ENCODE measurements at regions of chr17 and their contacts with region 1.

Region 1: DNA sequence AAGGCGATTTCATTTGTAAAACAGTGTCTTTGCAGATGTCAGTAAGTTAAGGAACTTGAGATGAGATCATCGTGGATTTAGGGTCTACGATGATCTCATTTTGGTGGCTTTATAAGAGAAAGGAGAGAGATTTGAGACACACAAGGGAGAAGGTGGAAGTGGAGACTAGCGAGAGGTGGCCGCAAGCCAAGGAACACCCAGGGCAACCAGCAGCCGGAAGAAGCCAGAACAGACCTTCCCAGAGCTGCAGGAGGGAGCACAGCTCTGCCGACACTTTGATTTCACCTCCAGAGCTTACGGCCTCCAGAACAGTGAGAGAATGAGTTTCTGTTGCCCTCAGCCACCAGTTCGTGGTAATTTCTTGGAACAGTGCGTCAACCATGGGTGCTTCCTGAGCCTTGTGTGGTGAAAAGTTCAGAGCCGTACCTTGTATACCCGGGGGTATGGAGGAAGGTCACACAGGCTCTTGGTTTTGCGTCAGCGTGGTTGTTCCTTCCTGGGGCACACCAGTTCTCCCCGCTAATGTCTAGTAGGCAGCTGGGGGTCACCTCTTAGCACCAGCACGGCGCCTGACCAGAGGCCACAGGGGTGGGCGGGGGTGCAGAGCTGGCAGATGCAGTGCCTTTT is 12.9 kb upstream of the SEC14L1 start:
- DNase-seq: no peak
- ATAC-seq: no peak
- H3K4me3 ChIP-seq: no peak overlapping the region
- H3K27ac ChIP-seq: peak overlapping the region; percentile 3 to 36; a peak in 4 of 6 replicates
- H3K4me1 ChIP-seq: peaks cover 66% of the 10 kb centered on the region
- CTCF ChIP-seq: no peak
- EP300 ChIP-seq: no peak
- POLR2A ChIP-seq: no peak
- RAD21 ChIP-seq: no peak

Region 2: DNA sequence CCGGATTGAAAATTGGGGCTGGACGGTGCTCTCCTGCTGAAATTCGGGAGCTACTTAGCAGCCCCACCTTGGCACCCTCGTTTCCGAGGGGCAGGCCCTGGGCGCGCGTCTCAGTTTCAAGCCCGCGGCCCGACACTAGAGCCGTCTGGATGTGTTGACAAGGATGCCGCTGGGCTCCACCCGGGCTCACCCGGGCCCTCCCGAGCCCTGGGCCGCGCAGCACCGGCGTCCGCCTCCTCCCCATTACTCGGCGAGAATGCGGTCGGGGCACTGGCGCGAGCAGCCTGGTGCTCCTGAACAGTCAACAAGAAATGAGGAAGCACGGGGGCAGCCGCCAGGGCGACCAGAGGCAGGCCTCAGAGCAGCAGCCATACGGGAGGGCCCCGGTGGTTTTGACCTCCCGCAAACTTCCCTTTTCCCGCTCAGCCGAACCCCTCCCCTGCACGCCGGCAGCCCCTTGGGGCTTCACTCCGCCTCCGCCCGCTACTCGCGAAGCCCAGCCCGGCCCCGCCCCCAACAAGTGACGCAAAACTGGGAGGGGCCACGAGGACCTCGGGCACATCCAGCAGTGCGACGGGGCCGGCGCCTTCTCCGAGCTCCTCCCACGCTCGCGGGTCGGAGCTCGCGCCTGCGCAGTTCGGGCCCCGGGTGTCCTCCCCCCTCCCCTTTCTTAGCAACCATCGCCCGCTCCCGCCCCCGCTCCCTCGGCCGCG is 12.5 kb after region 1 on chr17:
- CTCF ChIA-PET with region 1: interaction called, 11 read pairs
- POLR2A ChIA-PET with region 1: interaction called, 28 read pairs
- DNase-seq: peak; percentile 91 to 99
- ATAC-seq: peak; percentile 91 to 95
- H3K4me3 ChIP-seq: peak overlapping the region; percentile 90
- H3K27ac ChIP-seq: peak overlapping the region; percentile 95 to 96
- H3K4me1 ChIP-seq: peaks cover 13% of the 10 kb centered on the region
- CTCF ChIP-seq: no peak
- EP300 ChIP-seq: no peak
- POLR2A ChIP-seq: peak; percentile 88
- RAD21 ChIP-seq: peak in 1 of 2 experiments; percentile 25; a peak in 2 of 5 replicates